Activated CD8-positive, alpha-beta T cell treated with anti-CD3 and anti-CD28 coated beads, Interleukin-2, amount 10 ng/mL, durations not matched to agents 7 days and 5 days (primary cell): ENCODE measurements at regions of chr12 and their contacts with region 1.

Region 1: DNA sequence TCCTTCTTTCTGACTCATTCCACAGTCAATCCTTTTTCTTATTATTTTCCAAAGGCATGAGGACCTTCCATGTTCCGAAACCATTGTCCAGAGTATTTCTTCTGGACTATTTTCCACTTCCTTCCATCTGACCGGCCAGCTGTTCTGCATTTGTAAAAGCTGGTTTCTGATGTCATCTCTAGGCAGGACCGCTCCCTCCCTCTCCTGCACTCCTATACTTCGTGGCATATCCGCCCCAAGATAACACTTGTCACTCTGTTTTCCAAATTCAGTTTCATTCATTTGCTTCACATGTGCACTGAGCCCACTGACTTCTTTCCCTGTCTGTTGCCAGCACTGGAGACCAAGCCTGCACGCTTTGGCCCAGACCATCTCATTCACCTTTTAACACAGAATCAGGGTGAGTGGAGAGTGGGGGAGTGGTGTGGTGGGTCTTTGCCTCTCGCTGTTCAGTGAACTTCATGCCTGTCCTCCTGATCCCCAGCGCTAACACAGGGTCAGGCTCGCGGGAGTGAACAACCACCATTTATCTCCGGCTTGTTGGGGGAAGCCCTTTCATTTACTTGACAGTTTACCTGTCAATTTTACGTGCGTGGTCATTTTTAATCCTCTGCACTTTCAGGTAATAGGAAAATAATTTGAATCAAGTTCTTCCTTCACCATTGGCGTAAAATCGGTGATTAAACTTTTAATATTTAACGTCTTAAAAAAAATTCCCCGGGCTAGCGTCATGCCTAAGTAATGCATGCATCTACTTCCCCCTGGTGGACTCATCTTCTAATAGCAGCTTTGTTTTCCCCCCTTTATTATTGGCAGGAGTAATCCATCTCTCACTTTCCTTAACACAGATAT is 52.5 kb downstream of the C12orf75 start:
- DNase-seq: peak; percentile 50
- ATAC-seq: no peak
- H3K4me3 Mint-ChIP-seq: no peak overlapping the region
- H3K27ac Mint-ChIP-seq: no peak overlapping the region
- H3K4me1 Mint-ChIP-seq: no peaks in the 10 kb centered on the region
- H3K27me3 Mint-ChIP-seq: no peaks in the 10 kb centered on the region

Region 2: GRCh38 chr12:105275997-105276733 is 106.8 kb before region 1 on chr12:
- CTCF ChIA-PET with region 1: interaction called, 13 read pairs
- POLR2A ChIA-PET with region 1: no interaction called
- DNase-seq: no peak
- ATAC-seq: no peak
- H3K4me3 Mint-ChIP-seq: no peak overlapping the region
- H3K27ac Mint-ChIP-seq: no peak overlapping the region
- H3K4me1 Mint-ChIP-seq: peaks cover 10% of the 10 kb centered on the region
- H3K27me3 Mint-ChIP-seq: peaks cover under 1% of the 10 kb centered on the region

Region 3: DNA sequence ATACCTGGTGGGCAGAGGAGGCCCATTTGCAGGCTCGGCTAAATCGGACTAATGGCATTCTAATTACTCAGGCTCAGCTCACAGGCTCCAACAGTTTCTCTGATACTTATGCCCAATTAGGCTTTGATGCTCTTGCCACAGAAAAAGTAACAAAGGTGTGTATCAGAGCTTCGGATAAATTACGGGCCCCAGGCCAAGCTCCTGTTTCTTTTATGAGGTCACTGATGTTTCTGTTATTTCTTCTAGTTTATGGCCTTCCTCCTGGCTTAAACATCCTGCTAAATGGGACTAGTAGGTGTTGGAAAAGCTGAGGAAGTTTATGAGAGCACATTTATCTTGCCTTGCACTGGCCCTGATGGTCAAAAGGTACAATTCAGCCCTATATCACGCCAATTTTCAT is 81.3 kb before region 1 on chr12:
- CTCF ChIA-PET with region 1: no interaction called
- POLR2A ChIA-PET with region 1: no interaction called
- DNase-seq: no peak
- ATAC-seq: no peak
- H3K4me3 Mint-ChIP-seq: no peak overlapping the region
- H3K27ac Mint-ChIP-seq: no peak overlapping the region
- H3K4me1 Mint-ChIP-seq: no peaks in the 10 kb centered on the region
- H3K27me3 Mint-ChIP-seq: no peaks in the 10 kb centered on the region

Region 4: DNA sequence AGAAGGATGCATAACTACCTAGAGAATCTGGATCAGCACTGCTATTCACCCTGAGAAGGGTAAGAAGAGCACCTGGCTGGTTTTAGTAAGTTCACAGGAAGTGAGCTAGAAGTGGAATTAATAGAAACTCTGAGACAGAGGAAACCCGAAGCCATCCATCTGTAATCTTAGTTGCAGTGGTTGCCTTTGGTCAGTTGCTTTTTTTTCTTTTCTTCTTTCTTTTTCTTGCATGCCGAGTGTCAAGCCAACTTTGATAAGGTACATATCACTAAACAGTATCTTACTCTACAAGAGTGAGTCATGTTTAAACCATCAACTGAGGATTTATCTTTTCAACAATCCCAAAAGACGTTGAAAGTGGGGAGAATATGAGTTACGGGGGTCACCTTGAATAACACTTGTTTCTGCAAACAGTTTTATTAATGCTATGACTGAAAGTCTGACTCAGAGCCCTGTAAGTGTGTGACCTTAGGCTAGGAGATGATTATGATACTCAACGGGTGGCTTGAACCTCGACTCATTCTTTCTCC is 25.8 kb before region 1 on chr12:
- CTCF ChIA-PET with region 1: interaction called, 12 read pairs
- POLR2A ChIA-PET with region 1: no interaction called
- DNase-seq: no peak
- ATAC-seq: peak; percentile 74
- H3K4me3 Mint-ChIP-seq: peak overlapping the region; percentile 57
- H3K27ac Mint-ChIP-seq: peak overlapping the region; percentile 91
- H3K4me1 Mint-ChIP-seq: peaks cover 71% of the 10 kb centered on the region
- H3K27me3 Mint-ChIP-seq: no peaks in the 10 kb centered on the region